Endothelial cell of umbilical vein (primary cell): ENCODE measurements at regions of chr11 and their contacts with region 1.

Region 1: DNA sequence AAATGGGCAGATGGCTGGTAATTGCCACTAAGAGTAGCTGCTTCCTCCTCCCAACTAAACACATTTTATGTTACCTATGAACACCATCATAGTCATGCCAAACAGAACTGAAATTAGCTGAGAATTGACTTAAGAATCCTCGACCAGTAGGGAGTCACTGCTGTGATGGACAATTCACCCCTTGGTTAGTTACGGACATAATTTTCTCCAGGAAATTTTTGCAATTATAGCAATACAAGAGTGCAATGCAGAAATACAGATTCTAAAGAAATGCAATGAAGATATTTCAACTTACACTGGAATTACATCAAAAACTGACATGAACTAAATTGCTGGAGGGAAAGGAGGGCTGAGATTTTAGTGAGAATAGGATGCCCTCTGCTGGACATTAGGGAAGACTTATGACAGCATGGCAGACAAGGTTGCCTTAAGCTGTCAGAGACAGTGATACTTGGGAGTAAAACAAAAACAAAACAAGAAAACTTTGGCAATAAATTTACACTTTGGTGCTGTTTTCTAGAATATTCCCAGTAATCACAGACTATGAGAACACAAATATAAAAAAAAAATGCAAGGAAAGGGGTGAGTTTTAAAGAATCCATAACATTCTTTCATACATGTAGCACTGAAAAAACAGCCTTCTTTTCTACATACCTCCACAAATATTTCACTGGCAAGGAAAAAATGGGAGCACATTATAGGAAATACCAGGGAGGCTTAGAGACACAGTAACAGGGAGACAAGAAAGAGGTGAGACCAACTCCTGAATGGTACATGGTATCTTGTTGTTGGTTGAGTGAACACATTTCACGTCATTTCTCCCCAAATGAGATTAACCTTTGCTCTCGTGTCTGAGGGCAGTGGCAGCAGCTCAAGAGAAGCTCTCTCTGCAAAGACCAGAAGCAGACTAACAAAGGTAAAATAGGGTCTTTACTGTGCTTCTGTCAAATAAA is 11.2 kb upstream of the PPP2R1B start:
- DNase-seq: peak; percentile 75
- H3K4me3 ChIP-seq: no peak overlapping the region
- H3K27ac ChIP-seq: no peak overlapping the region
- H3K4me1 ChIP-seq: no peaks in the 10 kb centered on the region
- H3K27me3 ChIP-seq: no peaks in the 10 kb centered on the region
- CTCF ChIP-seq: peak; percentile 62 to 63
- POLR2A ChIP-seq: no peak

Region 2: DNA sequence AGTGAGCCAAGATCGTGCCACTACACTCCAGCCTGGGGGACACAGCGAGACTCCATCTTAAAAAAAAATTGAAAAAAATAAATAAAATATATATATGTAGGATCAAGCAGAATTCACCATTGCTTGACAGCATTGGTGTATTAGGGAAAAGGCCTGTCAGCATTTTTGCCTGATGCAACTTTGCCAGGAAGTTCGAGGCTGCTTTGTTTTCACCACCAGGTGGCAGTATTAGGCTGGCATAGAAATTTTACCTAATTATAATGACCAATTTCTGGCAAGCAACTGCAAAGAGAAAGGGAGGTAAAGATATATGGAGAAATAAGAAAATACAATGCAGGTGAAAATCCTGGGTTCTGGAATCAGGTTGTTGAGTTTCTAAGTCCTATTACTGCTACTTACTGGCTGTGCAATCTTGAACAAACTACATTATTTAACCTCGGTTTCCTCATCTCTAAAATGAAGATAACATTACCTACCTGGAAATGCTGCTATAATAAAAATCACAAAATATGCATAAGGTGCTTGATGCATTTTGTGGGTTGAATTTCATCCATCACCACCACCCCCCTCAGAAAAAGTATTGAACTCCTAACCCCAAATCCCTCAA is 212.2 kb before region 1 on chr11:
- CTCF ChIA-PET with region 1: interaction called, 29 read pairs
- POLR2A ChIA-PET with region 1: no interaction called
- dilution Hi-C with region 1: no loop called
- intact Hi-C with region 1: loop called (anchors 1 kb)
- DNase-seq: peak; percentile 77
- H3K4me3 ChIP-seq: no peak overlapping the region
- H3K27ac ChIP-seq: no peak overlapping the region
- H3K4me1 ChIP-seq: no peaks in the 10 kb centered on the region
- H3K27me3 ChIP-seq: no peaks in the 10 kb centered on the region
- CTCF ChIP-seq: peak; percentile 62 to 74
- POLR2A ChIP-seq: no peak

Region 3: DNA sequence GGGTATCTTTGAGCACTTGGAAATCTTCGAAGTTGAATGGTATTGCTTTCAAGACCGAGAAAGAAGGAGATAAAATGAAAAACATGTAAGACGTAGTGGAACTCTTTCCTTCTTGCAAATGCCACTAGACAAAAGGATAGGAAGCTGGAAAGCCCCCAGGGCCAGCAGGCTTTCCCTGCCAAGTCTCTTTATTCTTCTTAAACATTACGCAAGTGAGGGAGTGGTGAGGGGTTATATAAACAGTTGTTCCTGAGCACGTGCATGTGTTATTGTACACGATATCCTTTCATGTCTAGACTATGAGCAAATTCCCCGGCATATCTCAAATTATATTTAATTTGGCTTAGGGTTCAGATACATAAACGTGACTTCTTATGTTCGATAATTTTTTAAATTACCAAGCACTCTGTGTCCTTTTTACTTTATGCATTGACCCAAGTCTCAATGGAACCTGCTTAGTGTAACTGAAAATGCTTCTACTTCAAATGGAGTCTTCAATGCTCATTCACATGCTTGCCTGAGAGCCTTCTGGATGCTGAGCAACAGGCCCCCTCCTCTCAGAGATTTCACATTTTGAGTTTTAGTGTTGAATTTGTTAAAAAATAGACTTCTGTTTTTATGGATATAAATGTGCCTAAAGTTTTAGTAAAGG is 70.2 kb before region 1 on chr11:
- CTCF ChIA-PET with region 1: interaction called, 7 read pairs
- POLR2A ChIA-PET with region 1: no interaction called
- dilution Hi-C with region 1: no loop called
- intact Hi-C with region 1: loop called (anchors 2 kb)
- DNase-seq: peak; percentile 99
- H3K4me3 ChIP-seq: no peak overlapping the region
- H3K27ac ChIP-seq: peak overlapping the region; percentile 77
- H3K4me1 ChIP-seq: peaks cover 15% of the 10 kb centered on the region
- H3K27me3 ChIP-seq: no peaks in the 10 kb centered on the region
- CTCF ChIP-seq: no peak
- POLR2A ChIP-seq: peak; percentile 24

Region 4: DNA sequence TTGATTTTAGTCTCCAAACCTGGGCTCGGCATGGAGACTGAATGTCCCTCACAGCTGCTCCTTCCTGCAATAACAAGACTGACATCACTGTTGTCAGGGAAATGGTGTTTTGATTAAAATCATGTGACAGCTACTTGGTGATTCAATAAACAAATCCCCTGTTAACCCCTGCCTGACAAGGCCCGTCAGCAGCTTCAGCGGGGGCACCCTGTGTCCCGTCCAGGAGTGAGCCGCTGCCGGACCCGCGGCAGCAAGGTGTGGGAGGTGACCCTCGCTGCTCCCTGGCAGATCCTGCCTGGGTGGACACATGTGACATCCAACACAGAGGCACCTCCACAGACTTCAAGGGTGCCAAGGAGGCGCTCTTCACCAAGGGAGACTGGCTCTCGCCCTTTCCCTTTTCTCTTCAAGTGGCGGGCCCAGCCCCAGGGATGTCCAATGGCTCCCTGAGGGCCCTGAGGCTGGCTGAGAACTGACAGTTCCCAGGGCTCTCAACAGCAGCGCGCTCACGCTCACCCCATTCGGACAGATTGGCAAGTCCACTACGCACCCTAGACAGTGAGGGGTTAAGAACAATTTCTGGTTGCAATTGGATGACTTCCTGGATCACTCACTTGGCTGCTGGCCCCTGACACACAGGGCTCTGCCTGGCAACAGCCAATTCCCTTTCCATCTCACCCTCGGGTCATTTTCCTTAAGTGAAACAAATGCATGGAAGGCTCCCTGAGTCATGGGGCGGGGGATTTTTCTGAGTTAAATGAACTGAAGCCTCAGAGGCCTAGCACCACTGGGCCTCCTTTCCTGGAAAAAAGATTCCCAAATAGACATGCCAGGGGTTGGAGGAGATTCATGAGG is 41.9 kb before region 1 on chr11:
- CTCF ChIA-PET with region 1: interaction called, 19 read pairs
- POLR2A ChIA-PET with region 1: no interaction called
- dilution Hi-C with region 1: no loop called
- intact Hi-C with region 1: no loop called
- DNase-seq: peak; percentile 98
- H3K4me3 ChIP-seq: no peak overlapping the region
- H3K27ac ChIP-seq: peak overlapping the region; percentile 85
- H3K4me1 ChIP-seq: peaks cover 59% of the 10 kb centered on the region
- H3K27me3 ChIP-seq: no peaks in the 10 kb centered on the region
- CTCF ChIP-seq: no peak
- POLR2A ChIP-seq: peak; percentile 67

Region 5: DNA sequence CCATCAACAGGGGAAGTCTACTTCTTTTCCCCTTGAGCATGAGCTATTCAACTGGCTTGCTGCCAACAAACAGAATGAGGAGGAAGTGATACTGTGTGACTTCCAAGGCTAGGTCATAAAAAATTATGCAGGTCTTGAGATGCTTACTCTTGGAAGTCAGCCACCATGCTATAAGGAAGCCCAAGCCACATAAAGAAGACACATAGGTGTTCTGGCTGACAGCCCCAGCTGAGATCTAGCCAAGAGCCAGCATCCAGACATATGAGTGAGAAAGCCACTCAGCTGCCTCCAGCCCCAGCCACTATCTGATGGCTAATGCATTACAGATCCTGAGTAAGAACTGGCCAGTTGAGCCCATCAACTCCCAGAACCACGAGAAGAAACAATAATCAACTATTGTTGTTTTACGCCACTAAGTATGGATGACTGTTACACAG is 19.8 kb after region 1 on chr11:
- CTCF ChIA-PET with region 1: interaction called, 15 read pairs
- POLR2A ChIA-PET with region 1: no interaction called
- dilution Hi-C with region 1: no loop called
- intact Hi-C with region 1: no loop called
- DNase-seq: peak; percentile 53
- H3K4me3 ChIP-seq: no peak overlapping the region
- H3K27ac ChIP-seq: no peak overlapping the region
- H3K4me1 ChIP-seq: no peaks in the 10 kb centered on the region
- H3K27me3 ChIP-seq: no peaks in the 10 kb centered on the region
- CTCF ChIP-seq: no peak
- POLR2A ChIP-seq: no peak

Region 6: GRCh38 chr11:111833524-111833923 is 56.2 kb after region 1 on chr11:
- CTCF ChIA-PET with region 1: interaction called, 22 read pairs
- POLR2A ChIA-PET with region 1: no interaction called
- dilution Hi-C with region 1: no loop called
- intact Hi-C with region 1: no loop called
- DNase-seq: no peak
- H3K4me3 ChIP-seq: no peak overlapping the region
- H3K27ac ChIP-seq: no peak overlapping the region
- H3K4me1 ChIP-seq: no peaks in the 10 kb centered on the region
- H3K27me3 ChIP-seq: no peaks in the 10 kb centered on the region
- CTCF ChIP-seq: no peak
- POLR2A ChIP-seq: no peak

Region 7: DNA sequence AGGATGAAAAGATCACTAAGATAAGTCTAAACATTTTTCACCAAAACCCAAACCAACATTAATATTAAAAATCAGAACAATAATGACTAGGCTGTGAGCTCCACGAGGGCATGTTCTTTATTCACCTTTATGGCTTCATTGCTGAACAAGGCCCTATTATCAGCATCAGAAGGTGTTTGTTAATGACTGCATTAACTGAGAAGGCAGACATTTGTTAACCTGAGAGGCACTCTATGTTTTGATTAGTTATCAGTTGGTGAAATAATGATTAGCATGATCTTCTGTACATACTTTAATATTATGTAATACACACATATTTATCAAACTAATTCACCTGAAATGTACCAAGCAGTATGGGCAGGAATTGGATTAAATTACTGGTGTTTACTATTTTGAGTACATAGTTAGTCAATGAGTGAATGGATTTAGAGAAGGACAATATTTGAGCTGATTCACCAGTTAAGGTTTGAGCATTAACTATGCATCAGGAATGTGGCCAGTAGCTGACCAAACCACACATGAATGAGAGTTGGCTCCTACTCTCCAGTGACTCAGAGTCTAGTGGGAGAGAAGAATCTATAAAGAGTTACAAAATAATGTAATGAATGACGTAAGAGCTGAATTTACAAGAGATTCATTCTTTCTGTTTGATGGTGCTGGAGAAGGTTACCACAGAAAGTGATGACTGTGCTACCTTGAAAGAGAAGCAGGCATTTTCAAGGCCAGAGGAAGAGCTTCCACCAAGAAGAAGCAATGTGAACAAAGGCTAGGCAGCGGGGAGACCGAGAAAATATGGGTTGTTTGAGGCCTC is 379.8 kb after region 1 on chr11:
- CTCF ChIA-PET with region 1: no interaction called
- POLR2A ChIA-PET with region 1: no interaction called
- dilution Hi-C with region 1: no loop called
- intact Hi-C with region 1: no loop called
- DNase-seq: peak; percentile 82
- H3K4me3 ChIP-seq: no peak overlapping the region
- H3K27ac ChIP-seq: peak overlapping the region; percentile 84
- H3K4me1 ChIP-seq: peaks cover 10% of the 10 kb centered on the region
- H3K27me3 ChIP-seq: no peaks in the 10 kb centered on the region
- CTCF ChIP-seq: no peak
- POLR2A ChIP-seq: no peak

Region 8: DNA sequence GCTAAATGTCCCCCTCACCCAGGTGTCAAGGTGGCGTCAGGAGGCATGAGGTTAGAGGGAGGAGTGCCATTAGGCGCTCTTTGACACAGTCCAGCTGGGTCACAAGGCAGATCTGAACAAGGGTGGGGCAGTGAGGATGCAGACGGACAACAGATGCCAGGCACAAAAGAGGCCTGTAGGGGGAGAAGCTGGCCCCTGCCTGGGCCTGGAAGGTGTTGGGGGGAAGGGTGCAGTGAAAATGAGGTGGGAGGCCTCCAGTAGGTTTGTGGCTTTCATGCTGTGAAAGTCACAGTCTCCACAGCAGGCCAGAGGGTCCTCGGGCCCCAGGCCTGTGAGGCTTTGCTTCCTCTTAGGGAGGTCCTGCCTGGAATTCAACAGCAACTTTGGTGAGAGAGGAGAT is 568.3 kb after region 1 on chr11:
- CTCF ChIA-PET with region 1: no interaction called
- POLR2A ChIA-PET with region 1: no interaction called
- dilution Hi-C with region 1: no loop called
- intact Hi-C with region 1: no loop called
- DNase-seq: no peak
- H3K4me3 ChIP-seq: no peak overlapping the region
- H3K27ac ChIP-seq: no peak overlapping the region
- H3K4me1 ChIP-seq: no peaks in the 10 kb centered on the region
- H3K27me3 ChIP-seq: no peaks in the 10 kb centered on the region
- CTCF ChIP-seq: no peak
- POLR2A ChIP-seq: no peak